Activated naive CD4-positive, alpha-beta T cell treated with anti-CD3 and anti-CD28 coated beads for 36 hours (primary cell): ENCODE measurements at regions of chr5 and their contacts with region 1.

Region 1: GRCh38 chr5:131209506-131210150 is 38.9 kb downstream of the LYRM7 start:
- DNase-seq: peak; percentile 77
- H3K4me3 Mint-ChIP-seq: peak overlapping the region; percentile 69
- H3K27ac Mint-ChIP-seq: peak overlapping the region; percentile 96
- H3K4me1 Mint-ChIP-seq: peaks cover 57% of the 10 kb centered on the region
- H3K27me3 Mint-ChIP-seq: no peaks in the 10 kb centered on the region

Region 2: DNA sequence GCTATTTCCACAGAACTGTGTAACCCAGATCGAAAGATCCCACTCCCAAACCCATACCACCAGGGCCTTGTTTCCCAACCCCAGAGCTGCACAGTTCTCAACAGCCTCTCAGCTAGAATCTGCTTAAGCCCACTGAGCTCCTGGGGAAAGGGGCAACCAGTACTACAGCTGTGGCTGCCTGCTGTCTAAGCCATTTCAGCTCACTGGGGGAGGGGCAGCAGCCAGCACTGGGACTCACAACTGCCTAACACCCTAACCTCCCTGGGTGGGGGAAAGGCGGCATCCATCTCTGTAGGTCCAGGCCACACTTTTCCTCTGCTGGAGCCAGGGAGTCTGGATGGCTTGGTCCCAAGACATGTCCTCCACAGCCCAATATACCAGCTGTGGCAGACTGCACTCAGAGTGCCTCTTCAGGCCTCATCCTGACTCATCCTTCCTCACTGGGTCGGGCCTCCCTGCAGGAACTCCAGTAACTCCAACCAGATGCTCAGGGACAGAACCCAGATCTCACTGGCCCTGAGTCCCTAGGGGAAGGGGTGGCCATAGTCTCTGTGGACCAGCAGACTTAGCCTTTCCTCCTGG is 286.0 kb before region 1 on chr5:
- CTCF ChIA-PET with region 1: no interaction called
- intact Hi-C with region 1: no loop called
- DNase-seq: no peak
- H3K4me3 Mint-ChIP-seq: no peak overlapping the region
- H3K27ac Mint-ChIP-seq: no peak overlapping the region
- H3K4me1 Mint-ChIP-seq: no peaks in the 10 kb centered on the region
- H3K27me3 Mint-ChIP-seq: peaks cover 2% of the 10 kb centered on the region

Region 3: DNA sequence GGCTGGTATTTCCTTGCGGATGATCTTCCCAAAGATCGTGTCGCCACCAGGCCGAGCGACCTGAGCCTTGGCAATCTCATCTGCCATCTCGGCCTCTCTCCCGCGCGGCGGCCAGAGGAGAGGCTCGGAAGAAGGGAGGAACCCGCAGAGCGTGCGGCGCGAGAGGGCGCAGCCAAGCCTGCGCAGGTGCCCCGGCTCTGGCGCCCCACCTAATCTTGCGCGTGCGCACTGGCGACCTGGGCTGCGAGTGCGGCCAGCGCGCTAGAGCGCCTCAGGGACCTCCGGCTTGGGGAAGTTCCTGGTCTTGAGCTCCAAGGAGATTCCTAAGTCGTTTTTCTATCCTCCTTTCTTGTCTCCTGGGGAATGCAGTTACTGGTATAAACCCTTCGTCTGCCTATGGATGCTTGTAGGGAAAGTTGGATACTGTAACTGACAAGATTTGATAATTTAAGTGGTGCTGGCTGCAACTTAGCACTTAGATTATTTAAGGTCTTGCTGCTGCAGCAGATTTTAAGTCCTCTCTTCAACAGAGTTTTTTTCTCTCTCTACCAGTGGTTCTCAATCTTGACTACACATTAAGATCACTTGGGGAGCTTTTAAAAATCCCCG is 44.4 kb before region 1 on chr5 and contains the start of gene HINT1:
- CTCF ChIA-PET with region 1: no interaction called
- intact Hi-C with region 1: loop called (anchors 1 kb)
- DNase-seq: peak; percentile 93
- H3K4me3 Mint-ChIP-seq: peak within 1 kb of the TSS; percentile 96
- H3K27ac Mint-ChIP-seq: peak within 1 kb of the TSS; percentile 99
- H3K4me1 Mint-ChIP-seq: peaks cover 44% of the 10 kb centered on the region
- H3K27me3 Mint-ChIP-seq: no peaks in the 10 kb centered on the region
- total RNA-seq, gene HINT1: 372 to 379 TPM

Region 4: GRCh38 chr5:131224387-131225201 is 15.0 kb after region 1 on chr5:
- CTCF ChIA-PET with region 1: interaction called, 6 read pairs
- intact Hi-C with region 1: loop called (anchors 1 kb)
- DNase-seq: peak; percentile 30
- H3K4me3 Mint-ChIP-seq: no peak overlapping the region
- H3K27ac Mint-ChIP-seq: no peak overlapping the region
- H3K4me1 Mint-ChIP-seq: peaks cover 27% of the 10 kb centered on the region
- H3K27me3 Mint-ChIP-seq: no peaks in the 10 kb centered on the region

Region 5: GRCh38 chr5:131252824-131253171 is 43.2 kb after region 1 on chr5:
- CTCF ChIA-PET with region 1: interaction called, 4 read pairs
- intact Hi-C with region 1: loop called (anchors 1 kb)
- DNase-seq: peak; percentile 88
- H3K4me3 Mint-ChIP-seq: peak overlapping the region; percentile 94
- H3K27ac Mint-ChIP-seq: peak overlapping the region; percentile 95
- H3K4me1 Mint-ChIP-seq: peaks cover 72% of the 10 kb centered on the region
- H3K27me3 Mint-ChIP-seq: no peaks in the 10 kb centered on the region

Region 6: DNA sequence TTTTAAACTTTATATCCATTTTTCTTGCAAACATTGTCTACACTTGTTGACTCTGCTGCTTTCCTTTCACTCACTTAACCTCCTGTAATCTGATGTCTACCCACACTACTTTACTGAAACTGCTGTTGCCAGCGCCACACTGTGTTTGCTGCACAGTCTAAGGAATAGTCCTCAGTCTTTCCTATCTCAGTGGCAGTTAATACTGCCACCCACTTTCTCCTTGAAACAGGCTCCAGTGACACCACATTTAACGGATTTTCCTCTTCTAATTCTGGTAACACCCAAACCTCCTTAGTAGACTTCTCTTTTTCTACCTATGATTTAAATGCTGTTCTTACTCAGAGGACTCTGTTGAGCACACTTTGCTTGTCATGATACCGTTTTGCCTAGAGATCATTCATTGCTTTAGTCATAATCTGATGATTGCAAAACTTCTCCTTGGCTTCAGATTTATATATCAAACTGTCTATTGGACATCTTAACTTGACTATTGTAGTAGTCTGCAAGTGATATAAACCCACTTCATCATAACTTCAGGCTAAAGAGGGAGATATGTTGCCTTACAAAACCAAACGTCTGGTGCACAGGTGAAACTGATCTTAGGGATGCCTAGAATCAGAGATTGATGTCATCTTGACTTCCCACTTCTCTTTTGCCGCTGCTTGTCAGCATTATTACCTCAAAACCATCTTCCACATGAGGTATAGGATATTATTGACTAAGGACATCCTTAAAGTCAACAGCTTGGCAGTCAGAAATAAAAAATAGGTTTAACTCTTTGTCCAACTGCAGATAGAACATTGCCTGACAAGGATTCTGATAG is 148.3 kb after region 1 on chr5:
- CTCF ChIA-PET with region 1: no interaction called
- intact Hi-C with region 1: loop called (anchors 1 kb)
- DNase-seq: peak; percentile 67
- H3K4me3 Mint-ChIP-seq: peak overlapping the region; percentile 54
- H3K27ac Mint-ChIP-seq: peak overlapping the region; percentile 91
- H3K4me1 Mint-ChIP-seq: peaks cover 67% of the 10 kb centered on the region
- H3K27me3 Mint-ChIP-seq: no peaks in the 10 kb centered on the region